Right cardiac atrium (tissue), 5 donors: ENCODE measurements at regions of chr16 and their contacts with region 1.

Region 1: DNA sequence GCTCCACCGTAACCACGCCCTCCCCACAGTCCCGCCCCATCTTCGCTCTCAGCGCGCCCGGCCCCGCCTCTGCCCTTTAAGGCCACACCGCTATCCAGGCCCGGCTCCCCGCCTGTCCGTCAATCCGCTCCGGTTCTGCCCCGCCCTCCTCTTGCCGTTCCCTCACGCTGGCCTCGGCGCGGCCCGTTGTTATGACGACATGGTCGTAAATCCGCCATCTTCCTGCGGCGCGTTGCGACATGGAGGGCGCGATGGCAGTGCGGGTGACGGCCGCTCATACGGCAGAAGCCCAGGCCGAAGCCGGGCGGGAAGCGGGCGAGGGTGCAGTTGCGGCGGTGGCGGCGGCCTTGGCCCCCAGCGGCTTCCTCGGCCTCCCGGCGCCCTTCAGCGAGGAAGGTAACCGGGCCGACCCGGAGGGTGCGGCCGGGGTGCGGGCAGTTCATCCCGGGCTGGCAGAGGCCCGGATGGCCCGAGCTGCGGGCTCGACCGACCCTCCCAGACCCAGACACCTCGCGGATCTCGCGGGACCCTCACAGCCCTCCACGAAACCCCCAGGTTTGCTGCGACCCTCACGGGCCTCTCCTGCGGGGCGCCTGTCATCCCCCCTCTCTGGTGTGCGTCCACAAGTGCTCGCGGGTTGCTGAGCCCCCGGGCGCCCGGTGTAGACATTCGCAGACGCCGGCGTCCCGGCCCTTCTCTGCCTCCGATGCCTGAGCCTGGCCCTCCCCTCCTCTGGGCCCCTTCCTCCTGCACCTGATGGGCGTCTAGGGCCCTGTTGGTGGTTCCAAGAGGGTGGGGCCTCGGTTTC is at the start of gene E4F1:
- DNase-seq: peak; percentile 100
- ATAC-seq: peak; percentile 99
- H3K4me3 ChIP-seq: peak within 1 kb of the TSS; percentile 82
- H3K27ac ChIP-seq: peak within 1 kb of the TSS; percentile 59
- H3K4me1 ChIP-seq: no peaks in the 10 kb centered on the region
- H3K27me3 ChIP-seq: no peaks in the 10 kb centered on the region
- total RNA-seq, gene E4F1: 11.8 to 16.1 (median 14.2) TPM

Region 2: GRCh38 chr16:2267913-2268666 is 44.5 kb after region 1 on chr16 and contains the start of gene RNPS1:
- intact Hi-C with region 1: no loop called
- DNase-seq: peak; percentile 97 to 99 (median 99)
- ATAC-seq: peak; percentile 98
- H3K4me3 ChIP-seq: peak within 1 kb of the TSS; percentile 76
- H3K27ac ChIP-seq: peak within 1 kb of the TSS; percentile 98
- H3K4me1 ChIP-seq: peaks cover 6% of the 10 kb centered on the region
- H3K27me3 ChIP-seq: no peaks in the 10 kb centered on the region
- total RNA-seq, gene RNPS1: 103 to 114 (median 110) TPM

Region 3: GRCh38 chr16:2514323-2515179 is 291.0 kb after region 1 on chr16:
- intact Hi-C with region 1: loop called in 1 of 4 experiments (anchors 5 kb)
- DNase-seq: peak in 2 of 3 donors; percentile 41 to 73
- ATAC-seq: no peak
- H3K4me3 ChIP-seq: peak overlapping the region; percentile 97
- H3K27ac ChIP-seq: peak overlapping the region; percentile 92
- H3K4me1 ChIP-seq: peaks cover 22% of the 10 kb centered on the region
- H3K27me3 ChIP-seq: no peaks in the 10 kb centered on the region